Activated CD4-positive, alpha-beta T cell treated with anti-CD3 and anti-CD28 coated beads for 36 hours (primary cell): ENCODE measurements at regions of chr3 and their contacts with region 1.

Region 1: DNA sequence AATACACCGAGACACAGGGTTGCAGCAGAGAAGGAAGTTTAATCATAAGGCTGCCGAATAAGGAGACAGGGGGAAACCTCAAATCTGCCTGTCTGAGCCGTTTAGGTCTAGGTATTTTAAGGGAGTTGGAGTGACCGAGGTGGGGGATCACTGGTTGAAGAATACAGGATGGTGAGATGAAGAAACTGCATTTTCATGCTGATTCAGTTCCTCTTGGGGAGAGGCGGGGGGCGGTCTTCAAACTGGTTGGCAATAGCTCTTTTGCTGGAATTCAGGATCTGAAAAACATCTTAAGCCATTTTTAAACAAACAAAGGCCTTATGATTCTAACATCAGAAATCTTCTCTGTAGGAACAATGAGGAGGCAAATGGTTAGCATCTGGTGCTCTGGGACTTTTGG is 699.5 kb upstream of the CFAP20DC start:
- DNase-seq: no peak
- ATAC-seq: no peak
- H3K4me3 Mint-ChIP-seq: no peak overlapping the region
- H3K27ac Mint-ChIP-seq: no peak overlapping the region
- H3K4me1 Mint-ChIP-seq: peaks cover 24% of the 10 kb centered on the region
- H3K27me3 Mint-ChIP-seq: no peaks in the 10 kb centered on the region

Region 2: DNA sequence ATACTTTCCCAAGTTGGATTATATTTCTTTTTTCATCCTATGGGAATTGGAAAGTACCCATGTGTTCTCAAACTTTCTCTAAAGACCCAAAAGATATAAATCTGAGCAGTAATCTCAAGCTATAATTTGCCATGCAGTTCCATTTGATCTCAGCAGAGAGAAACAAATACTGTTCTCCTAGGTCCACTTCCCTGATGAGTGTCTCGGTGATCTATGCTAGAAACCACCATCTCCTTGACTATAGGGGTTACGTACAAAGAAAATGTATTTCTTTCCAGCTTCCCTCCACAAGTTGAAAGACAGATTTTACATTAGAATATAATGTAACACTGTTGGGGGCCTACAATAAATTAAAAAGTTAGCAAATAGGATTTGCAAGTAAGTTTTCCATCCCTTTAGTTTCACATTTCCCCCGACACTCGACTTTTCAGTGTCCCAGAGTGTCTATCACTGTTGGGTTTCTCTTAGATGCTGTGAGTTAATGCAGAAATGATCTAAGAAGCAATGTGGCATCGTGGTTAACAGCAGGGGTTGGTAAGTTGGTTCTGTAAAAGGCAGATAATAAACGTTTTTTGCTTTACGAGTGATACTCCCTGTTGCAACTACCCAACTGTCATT is 234.3 kb before region 1 on chr3:
- CTCF ChIA-PET with region 1: no interaction called
- POLR2A ChIA-PET with region 1: no interaction called
- intact Hi-C with region 1: no loop called
- DNase-seq: no peak
- ATAC-seq: no peak
- H3K4me3 Mint-ChIP-seq: no peak overlapping the region
- H3K27ac Mint-ChIP-seq: no peak overlapping the region
- H3K4me1 Mint-ChIP-seq: peaks cover 12% of the 10 kb centered on the region
- H3K27me3 Mint-ChIP-seq: peaks cover 2% of the 10 kb centered on the region

Region 3: DNA sequence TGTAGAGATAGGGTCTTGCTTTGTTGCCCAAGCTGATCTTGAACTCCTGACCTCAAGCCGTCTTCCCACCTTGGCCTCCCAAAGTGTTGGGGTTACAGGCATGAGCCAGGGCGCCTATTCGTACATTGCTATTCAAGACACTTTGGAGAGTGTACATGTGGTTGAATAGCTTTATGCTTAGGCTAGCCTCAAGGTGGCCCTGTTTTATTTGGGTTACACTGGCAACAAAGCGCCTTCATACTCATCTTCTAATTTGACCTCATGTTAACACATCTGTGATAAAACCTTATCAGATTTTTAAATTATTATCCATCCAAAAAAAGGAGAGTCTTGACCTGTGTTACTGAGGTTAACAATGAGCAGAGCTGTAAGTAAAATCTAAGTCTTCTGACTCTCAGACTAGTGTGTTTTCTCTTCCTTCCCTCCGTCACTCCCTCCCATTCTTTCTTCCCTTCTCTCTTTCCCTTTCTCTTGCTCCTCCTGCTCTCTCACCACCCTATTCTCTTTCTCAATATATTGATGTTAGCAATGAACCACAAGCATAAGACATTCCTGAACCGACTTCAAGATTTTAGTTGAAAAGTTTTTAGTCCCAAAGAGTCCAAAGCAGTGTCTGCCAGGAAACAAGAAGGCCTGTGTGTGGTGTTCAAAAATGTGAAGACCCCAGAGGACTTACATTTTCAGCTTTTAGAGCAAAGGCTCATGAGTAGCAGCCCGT is 95.7 kb before region 1 on chr3:
- CTCF ChIA-PET with region 1: no interaction called
- POLR2A ChIA-PET with region 1: interaction called, 10 read pairs
- intact Hi-C with region 1: no loop called
- DNase-seq: no peak
- ATAC-seq: no peak
- H3K4me3 Mint-ChIP-seq: no peak overlapping the region
- H3K27ac Mint-ChIP-seq: no peak overlapping the region
- H3K4me1 Mint-ChIP-seq: no peaks in the 10 kb centered on the region
- H3K27me3 Mint-ChIP-seq: peaks cover 1% of the 10 kb centered on the region

Region 4: GRCh38 chr3:59727902-59728586 is 21.2 kb before region 1 on chr3:
- CTCF ChIA-PET with region 1: no interaction called
- POLR2A ChIA-PET with region 1: no interaction called
- intact Hi-C with region 1: no loop called
- DNase-seq: no peak
- ATAC-seq: no peak
- H3K4me3 Mint-ChIP-seq: no peak overlapping the region
- H3K27ac Mint-ChIP-seq: no peak overlapping the region
- H3K4me1 Mint-ChIP-seq: peaks cover 37% of the 10 kb centered on the region
- H3K27me3 Mint-ChIP-seq: no peaks in the 10 kb centered on the region

Region 5: DNA sequence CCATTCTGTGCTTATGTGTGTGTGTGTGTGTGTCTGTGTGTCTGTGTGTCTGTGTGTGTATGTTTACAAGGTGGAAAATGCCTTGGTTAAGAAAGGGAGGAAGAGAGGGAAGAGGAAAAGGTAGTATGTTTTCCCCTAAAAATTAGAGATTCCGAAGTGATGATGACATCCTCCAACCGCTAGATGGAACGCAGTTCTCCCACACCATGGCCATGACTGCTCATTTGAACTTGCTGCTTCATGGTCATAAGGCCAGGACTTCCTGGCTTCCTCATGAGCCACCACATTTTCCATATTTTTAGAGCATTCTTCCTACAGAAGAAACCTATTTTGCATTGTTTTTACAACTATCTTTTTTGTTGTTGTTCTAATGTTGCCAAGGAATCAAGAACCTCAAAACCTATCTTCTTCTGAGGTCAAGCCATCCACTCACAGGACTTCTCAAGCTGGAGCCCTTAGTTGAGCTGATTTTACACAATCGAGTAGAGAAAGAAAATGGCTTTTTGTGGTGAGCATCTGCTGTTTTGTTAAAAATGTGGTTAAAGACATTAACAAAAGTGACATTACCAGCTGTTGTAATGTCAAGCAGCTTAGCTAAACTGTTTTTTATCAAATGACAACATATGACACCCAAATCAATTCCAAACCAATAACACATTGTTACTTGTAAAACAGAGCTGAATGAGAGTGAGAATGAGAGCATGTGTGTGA is 411.0 kb after region 1 on chr3:
- CTCF ChIA-PET with region 1: no interaction called
- POLR2A ChIA-PET with region 1: no interaction called
- intact Hi-C with region 1: no loop called
- DNase-seq: no peak
- ATAC-seq: no peak
- H3K4me3 Mint-ChIP-seq: no peak overlapping the region
- H3K27ac Mint-ChIP-seq: no peak overlapping the region
- H3K4me1 Mint-ChIP-seq: peaks cover 2% of the 10 kb centered on the region
- H3K27me3 Mint-ChIP-seq: no peaks in the 10 kb centered on the region